Mammary epithelial cell (primary cell): ENCODE measurements at regions of chr3 and their contacts with region 1.

Region 1: GRCh38 chr3:150721285-150722130 is 17.8 kb upstream of the ERICH6 start:
- DNase-seq: peak; percentile 51
- H3K4me3 ChIP-seq: no peak overlapping the region
- H3K27ac ChIP-seq: no peak overlapping the region
- H3K4me1 ChIP-seq: peaks cover 4% of the 10 kb centered on the region
- H3K27me3 ChIP-seq: no peaks in the 10 kb centered on the region
- CTCF ChIP-seq: peak; percentile 73 to 91

Region 2: DNA sequence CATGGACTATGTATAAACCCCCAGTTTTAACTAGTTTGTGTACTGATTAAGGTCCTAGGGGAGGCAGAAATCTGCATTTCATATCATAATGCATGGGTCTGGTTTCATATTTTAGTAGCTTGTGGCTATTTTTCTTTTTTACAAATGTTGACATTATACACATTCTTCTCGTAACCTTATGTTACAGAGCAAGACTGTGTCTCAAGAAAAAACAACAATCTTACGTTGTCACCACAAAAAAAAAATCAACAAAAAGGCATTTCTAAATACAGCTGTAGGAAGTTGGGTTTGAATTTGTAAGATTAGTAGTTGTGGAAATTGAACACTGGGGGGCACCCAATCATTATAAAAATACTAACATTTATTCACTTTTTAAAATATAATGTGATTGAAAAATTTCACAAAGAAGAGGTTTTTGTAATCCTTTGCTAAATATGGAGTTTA is 193.1 kb before region 1 on chr3:
- CTCF ChIA-PET with region 1: no interaction called
- dilution Hi-C with region 1: no loop called
- in situ Hi-C with region 1: no loop called
- intact Hi-C with region 1: loop called (anchors 5 kb)
- DNase-seq: no peak
- H3K4me3 ChIP-seq: no peak overlapping the region
- H3K27ac ChIP-seq: no peak overlapping the region
- H3K4me1 ChIP-seq: no peaks in the 10 kb centered on the region
- H3K27me3 ChIP-seq: no peaks in the 10 kb centered on the region
- CTCF ChIP-seq: peak in 1 of 2 donors; percentile 30

Region 3: GRCh38 chr3:150681057-150681456 is 40.5 kb before region 1 on chr3:
- CTCF ChIA-PET with region 1: no interaction called
- dilution Hi-C with region 1: no loop called
- in situ Hi-C with region 1: no loop called
- intact Hi-C with region 1: no loop called
- DNase-seq: no peak
- H3K4me3 ChIP-seq: no peak overlapping the region
- H3K27ac ChIP-seq: no peak overlapping the region
- H3K4me1 ChIP-seq: no peaks in the 10 kb centered on the region
- H3K27me3 ChIP-seq: peaks cover 1% of the 10 kb centered on the region
- CTCF ChIP-seq: no peak

Region 4: GRCh38 chr3:150763122-150763841 is 41.8 kb after region 1 on chr3 and contains the start of gene SIAH2:
- CTCF ChIA-PET with region 1: interaction called, 4 read pairs
- dilution Hi-C with region 1: no loop called
- in situ Hi-C with region 1: no loop called
- intact Hi-C with region 1: loop called (anchors 1 kb)
- DNase-seq: peak; percentile 95
- H3K4me3 ChIP-seq: peak within 1 kb of the TSS; percentile 59 to 96 (median 87)
- H3K27ac ChIP-seq: peak within 1 kb of the TSS; percentile 75
- H3K4me1 ChIP-seq: peaks cover 30% of the 10 kb centered on the region
- H3K27me3 ChIP-seq: no peaks in the 10 kb centered on the region
- CTCF ChIP-seq: no peak
- total RNA-seq, gene SIAH2: 23.7 to 30.5 TPM

Region 5: DNA sequence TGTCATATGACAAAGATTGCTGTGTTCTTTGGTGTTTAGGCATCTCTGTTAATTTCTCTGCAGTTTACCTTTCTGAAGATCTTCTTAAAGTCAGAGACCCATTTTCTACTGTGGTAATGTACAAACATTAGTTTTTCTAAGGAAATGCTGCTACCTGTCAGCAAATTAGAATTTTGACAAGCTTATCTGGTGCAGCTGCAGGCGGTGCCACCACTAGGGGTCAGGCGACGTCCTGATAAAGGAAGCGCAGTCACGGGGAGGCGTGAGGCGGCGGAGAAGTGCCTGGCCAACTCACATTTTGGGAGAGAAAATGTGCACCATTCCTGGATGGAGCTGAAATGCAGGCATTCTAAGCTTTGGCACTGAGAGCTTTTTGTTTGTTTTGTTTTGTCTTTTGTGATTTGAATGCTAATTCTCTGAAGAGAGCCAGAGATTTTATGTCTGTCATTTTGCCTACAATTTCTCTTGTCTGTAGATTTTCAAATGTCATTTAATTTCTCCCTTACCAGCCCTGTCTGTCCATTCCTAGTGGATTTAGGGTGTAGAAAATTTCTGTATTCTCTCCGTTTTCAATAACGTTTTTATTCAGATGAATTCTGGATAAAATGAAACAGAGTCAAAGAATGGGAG is 66.3 kb after region 1 on chr3:
- CTCF ChIA-PET with region 1: no interaction called
- dilution Hi-C with region 1: no loop called
- in situ Hi-C with region 1: no loop called
- intact Hi-C with region 1: loop called (anchors 1 kb)
- DNase-seq: peak; percentile 50
- H3K4me3 ChIP-seq: no peak overlapping the region
- H3K27ac ChIP-seq: no peak overlapping the region
- H3K4me1 ChIP-seq: peaks cover 6% of the 10 kb centered on the region
- H3K27me3 ChIP-seq: no peaks in the 10 kb centered on the region
- CTCF ChIP-seq: peak; percentile 90 to 99